A673 (cell line): ENCODE measurements at regions of chr14 and their contacts with region 1.

Region 1: DNA sequence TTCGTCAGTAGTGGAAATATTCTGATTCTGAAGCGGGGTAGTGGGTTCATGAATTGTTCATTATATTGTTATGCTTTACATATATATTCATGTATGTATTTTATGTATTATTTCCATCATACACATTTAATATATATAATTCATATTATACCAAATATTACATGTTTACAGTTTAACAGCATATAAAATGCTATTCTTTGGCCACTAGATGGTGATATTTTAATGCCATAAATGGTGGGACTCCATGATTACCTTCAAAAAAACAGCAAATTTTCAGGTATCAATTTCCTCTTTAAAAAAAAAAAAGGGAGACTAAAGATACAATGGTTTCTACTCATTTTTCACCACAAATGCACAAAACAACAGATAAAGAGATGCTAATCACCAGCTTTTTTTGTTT is 41.0 kb downstream of the BDKRB1 start:
- DNase-seq: peak; percentile 49
- H3K4me3 ChIP-seq: no peak overlapping the region
- H3K27ac ChIP-seq: no peak overlapping the region
- H3K4me1 ChIP-seq: no peaks in the 10 kb centered on the region
- H3K27me3 ChIP-seq: no peaks in the 10 kb centered on the region
- CTCF ChIP-seq: peak; percentile 64

Region 2: GRCh38 chr14:96424109-96424989 is 127.3 kb after region 1 on chr14:
- CTCF ChIA-PET with region 1: no interaction called
- POLR2A ChIA-PET with region 1: no interaction called
- intact Hi-C with region 1: loop called (anchors 1 kb)
- DNase-seq: peak; percentile 86
- H3K4me3 ChIP-seq: peak overlapping the region; percentile 30
- H3K27ac ChIP-seq: no peak overlapping the region
- H3K4me1 ChIP-seq: no peaks in the 10 kb centered on the region
- H3K27me3 ChIP-seq: no peaks in the 10 kb centered on the region
- CTCF ChIP-seq: peak; percentile 84